ENCODE measurements at regions of chr12 and their contacts with region 1.

Region 1: DNA sequence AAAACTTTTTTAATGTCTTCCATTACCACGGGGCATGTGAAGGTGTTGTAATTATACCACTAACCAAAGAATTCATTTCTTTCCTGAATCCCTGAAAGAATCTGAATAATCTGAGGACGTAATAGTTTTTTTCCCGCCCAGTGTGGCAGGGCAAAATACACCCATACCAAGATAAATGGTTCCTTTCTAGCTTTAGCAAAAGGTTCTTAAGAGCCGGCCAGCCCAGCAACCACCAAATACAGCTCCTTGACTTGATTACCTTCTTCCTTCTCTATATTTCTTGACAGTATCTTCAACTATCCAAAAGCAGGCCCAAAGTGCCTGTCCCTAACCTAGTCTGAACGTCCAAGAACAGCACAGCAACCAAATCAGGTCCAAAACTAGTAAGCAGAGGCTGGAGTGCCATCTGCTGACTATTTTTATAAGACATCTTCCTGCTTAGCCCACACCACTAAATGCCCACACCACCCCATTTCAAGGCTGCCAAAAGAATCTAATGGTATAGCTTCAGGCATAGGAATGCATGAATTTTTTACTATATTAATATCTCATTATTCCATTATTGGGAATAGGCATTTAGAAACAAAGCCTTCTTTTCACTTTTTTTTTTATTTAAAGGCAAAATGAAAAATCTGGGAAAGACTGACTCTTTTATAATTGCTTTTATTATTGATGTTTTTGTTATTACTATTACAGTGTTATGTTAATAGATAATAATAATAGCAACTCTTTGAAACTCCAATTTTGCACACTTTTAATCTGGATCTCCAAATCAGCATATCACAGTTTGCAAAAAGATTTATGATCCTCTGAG is 524.4 kb downstream of the MED13L start:
- DNase-seq: peak; percentile 52
- H3K4me3 ChIP-seq: peak overlapping the region in 1 of 3 experiments; percentile 67
- H3K27ac ChIP-seq: no peak overlapping the region
- H3K4me1 ChIP-seq: peaks cover 9% of the 10 kb centered on the region
- H3K27me3 ChIP-seq: no peaks in the 10 kb centered on the region
- CTCF ChIP-seq: peak; percentile 55 to 67

Region 2: DNA sequence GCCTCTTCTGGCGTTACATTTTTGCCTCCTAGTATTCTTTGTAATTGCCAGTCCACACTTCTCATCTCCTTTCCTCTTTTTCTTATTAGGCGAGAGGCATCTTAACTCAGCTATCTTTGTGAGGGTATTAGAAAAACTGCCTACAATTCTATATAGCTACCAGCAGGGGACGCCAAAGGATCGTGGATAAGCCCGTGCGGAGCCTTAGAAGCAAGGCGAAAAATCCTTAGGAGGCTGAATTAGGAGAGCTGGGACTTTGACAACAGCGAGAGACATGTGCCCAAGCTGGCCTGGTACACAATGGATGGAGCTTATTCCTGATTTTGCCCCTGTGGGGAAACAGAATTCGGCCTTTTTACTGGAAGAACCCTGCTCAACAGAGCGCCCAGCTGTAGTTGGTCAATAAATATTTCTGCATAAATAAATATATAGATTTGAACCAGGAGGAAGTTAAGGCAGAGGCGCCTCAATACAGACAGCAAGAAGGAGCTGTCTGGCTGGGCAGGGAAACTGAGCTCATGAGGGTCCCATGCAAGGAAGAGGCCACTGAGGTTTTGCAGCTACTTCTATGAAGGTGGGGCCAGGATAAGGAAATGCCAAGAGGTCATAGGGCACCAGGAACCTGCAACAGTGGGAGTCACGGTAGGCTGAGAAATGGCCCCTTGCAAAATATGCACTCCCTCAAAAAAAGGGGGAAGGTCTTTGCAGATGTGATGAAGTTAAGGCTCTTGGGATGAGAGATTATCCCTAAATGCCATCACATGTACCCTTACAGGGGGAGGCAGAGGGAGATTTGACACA is 1772.4 kb before region 1 on chr12:
- CTCF ChIA-PET with region 1: no interaction called
- dilution Hi-C with region 1: no loop called
- in situ Hi-C with region 1: no loop called
- intact Hi-C with region 1: loop called (anchors 5 kb)
- DNase-seq: peak; percentile 30
- H3K4me3 ChIP-seq: no peak overlapping the region
- H3K27ac ChIP-seq: no peak overlapping the region
- H3K4me1 ChIP-seq: no peaks in the 10 kb centered on the region
- H3K27me3 ChIP-seq: no peaks in the 10 kb centered on the region
- CTCF ChIP-seq: peak; percentile 99

Region 3: DNA sequence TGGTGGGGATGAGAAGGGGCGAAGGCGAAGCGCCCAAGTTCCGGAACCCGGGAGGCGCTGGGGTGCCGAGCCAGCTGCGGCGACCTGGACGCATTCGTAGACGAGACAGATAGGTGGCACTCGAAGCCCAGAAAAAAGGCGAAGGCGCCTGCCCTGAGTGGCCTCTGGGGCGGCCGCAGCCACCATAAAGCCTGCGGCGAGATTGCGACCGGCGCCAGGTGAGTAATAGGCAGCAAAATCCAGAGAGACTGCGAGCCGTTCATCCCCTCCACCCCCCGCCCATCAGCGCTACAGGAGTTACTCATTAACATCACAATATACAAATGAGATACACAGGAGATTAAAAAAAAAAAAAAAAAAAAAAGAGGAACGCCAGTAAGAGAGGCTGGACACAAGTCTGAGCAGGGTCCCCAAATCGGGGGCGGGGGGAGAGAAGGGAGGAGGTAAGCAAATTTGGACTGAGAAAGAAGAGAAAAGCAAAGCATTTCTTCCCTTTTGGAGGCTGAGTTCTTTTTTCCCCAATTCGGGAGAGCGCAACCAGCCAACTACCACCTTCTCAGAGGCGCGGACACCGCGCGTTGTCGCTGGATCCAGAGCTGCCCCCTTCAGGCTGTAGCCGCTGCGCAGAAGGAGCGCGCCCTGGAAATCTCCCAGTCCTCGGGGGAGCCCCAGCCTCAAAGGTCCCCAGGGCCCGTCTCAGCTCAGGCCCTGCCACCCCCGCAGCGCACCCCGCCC is 1084.8 kb before region 1 on chr12:
- CTCF ChIA-PET with region 1: no interaction called
- dilution Hi-C with region 1: no loop called
- in situ Hi-C with region 1: no loop called
- intact Hi-C with region 1: loop called (anchors 1 kb)
- DNase-seq: peak; percentile 91
- H3K4me3 ChIP-seq: peak overlapping the region; percentile 43 to 60 (median 48)
- H3K27ac ChIP-seq: peak overlapping the region; percentile 75
- H3K4me1 ChIP-seq: peaks cover 41% of the 10 kb centered on the region
- H3K27me3 ChIP-seq: no peaks in the 10 kb centered on the region
- CTCF ChIP-seq: peak; percentile 35 to 69

Region 4: GRCh38 chr12:114999812-115000437 is 753.2 kb before region 1 on chr12:
- CTCF ChIA-PET with region 1: no interaction called
- dilution Hi-C with region 1: no loop called
- in situ Hi-C with region 1: no loop called
- intact Hi-C with region 1: loop called (anchors 5 kb)
- DNase-seq: peak; percentile 83
- H3K4me3 ChIP-seq: no peak overlapping the region
- H3K27ac ChIP-seq: no peak overlapping the region
- H3K4me1 ChIP-seq: peaks cover 7% of the 10 kb centered on the region
- H3K27me3 ChIP-seq: no peaks in the 10 kb centered on the region
- CTCF ChIP-seq: no peak

Region 5: DNA sequence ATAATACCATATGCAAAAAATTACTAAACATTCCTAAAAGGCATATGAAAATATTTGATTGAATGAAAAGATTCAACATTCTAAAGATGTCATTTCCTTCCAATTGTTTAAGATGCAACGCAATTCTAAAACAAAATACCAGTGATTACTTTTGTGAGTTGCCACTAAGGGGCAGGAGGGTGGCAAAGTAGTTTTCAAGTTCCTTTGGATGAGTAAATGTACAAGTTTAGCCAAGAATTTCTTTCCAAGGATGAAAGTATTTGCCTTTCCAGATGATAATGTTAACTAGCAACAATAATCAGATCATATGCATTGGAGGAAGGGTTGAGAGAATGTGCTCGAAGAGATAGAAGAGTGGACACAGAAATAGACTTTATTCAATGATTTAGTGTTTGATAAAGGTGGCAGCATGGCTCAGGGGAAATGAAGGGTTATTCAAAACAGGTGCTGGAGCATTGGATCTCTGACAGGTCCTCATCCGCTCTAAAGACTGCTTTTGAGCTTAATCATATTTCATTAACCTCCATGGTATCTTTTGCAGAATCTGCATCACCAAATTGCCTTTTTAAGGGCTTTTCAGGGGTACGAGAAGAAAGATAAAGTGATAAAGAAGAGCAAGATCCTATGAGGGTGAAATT is 390.7 kb before region 1 on chr12:
- CTCF ChIA-PET with region 1: no interaction called
- dilution Hi-C with region 1: no loop called
- in situ Hi-C with region 1: loop called in 1 of 2 experiments (anchors 25 kb)
- intact Hi-C with region 1: loop called (anchors 5 kb)
- DNase-seq: no peak
- H3K4me3 ChIP-seq: no peak overlapping the region
- H3K27ac ChIP-seq: no peak overlapping the region
- H3K4me1 ChIP-seq: no peaks in the 10 kb centered on the region
- H3K27me3 ChIP-seq: no peaks in the 10 kb centered on the region
- CTCF ChIP-seq: peak in 1 of 2 donors; percentile 39

Region 6: GRCh38 chr12:115828186-115828585 is 75.1 kb after region 1 on chr12:
- CTCF ChIA-PET with region 1: no interaction called
- dilution Hi-C with region 1: loop called (anchors 5 kb)
- in situ Hi-C with region 1: no loop called
- intact Hi-C with region 1: no loop called
- DNase-seq: no peak
- H3K4me3 ChIP-seq: no peak overlapping the region
- H3K27ac ChIP-seq: no peak overlapping the region
- H3K4me1 ChIP-seq: no peaks in the 10 kb centered on the region
- H3K27me3 ChIP-seq: no peaks in the 10 kb centered on the region
- CTCF ChIP-seq: no peak

Measured in mammary epithelial cell (primary cell).